ENCODE measurements at regions of chr6 and their contacts with region 1.

Region 1: GRCh38 chr6:20401205-20402091 is at the start of gene E2F3:
- DNase-seq: peak; percentile 100
- H3K4me3 ChIP-seq: peak within 1 kb of the TSS; percentile 87
- H3K27ac ChIP-seq: peak within 1 kb of the TSS; percentile 65
- H3K27me3 ChIP-seq: no peaks in the 10 kb centered on the region
- CTCF ChIP-seq: no peak
- polyA plus RNA-seq, gene E2F3: 10.4 and 10.7 TPM in 2 replicates

Region 2: GRCh38 chr6:18595774-18596530 is 1805.5 kb before region 1 on chr6:
- CTCF ChIA-PET with region 1: interaction called, 10 read pairs
- POLR2A ChIA-PET with region 1: no interaction called
- DNase-seq: peak; percentile 36
- H3K4me3 ChIP-seq: no peak overlapping the region
- H3K27ac ChIP-seq: no peak overlapping the region
- H3K27me3 ChIP-seq: no peaks in the 10 kb centered on the region
- CTCF ChIP-seq: peak; percentile 99

Region 3: GRCh38 chr6:20377623-20378265 is 23.7 kb before region 1 on chr6:
- CTCF ChIA-PET with region 1: interaction called, 20 read pairs
- POLR2A ChIA-PET with region 1: interaction called, 8 read pairs
- DNase-seq: peak; percentile 53
- H3K4me3 ChIP-seq: no peak overlapping the region
- H3K27ac ChIP-seq: no peak overlapping the region
- H3K27me3 ChIP-seq: no peaks in the 10 kb centered on the region
- CTCF ChIP-seq: no peak

Region 4: GRCh38 chr6:20417819-20418218 is 16.4 kb after region 1 on chr6:
- CTCF ChIA-PET with region 1: interaction called, 20 read pairs
- POLR2A ChIA-PET with region 1: interaction called, 3 read pairs
- DNase-seq: no peak
- H3K4me3 ChIP-seq: no peak overlapping the region
- H3K27ac ChIP-seq: no peak overlapping the region
- H3K27me3 ChIP-seq: no peaks in the 10 kb centered on the region
- CTCF ChIP-seq: no peak

Region 5: GRCh38 chr6:20534295-20535262 is 133.1 kb after region 1 on chr6 and contains the start of gene CDKAL1:
- CTCF ChIA-PET with region 1: interaction called, 18 read pairs
- POLR2A ChIA-PET with region 1: no interaction called
- DNase-seq: peak; percentile 83
- H3K4me3 ChIP-seq: peak within 1 kb of the TSS; percentile 96
- H3K27ac ChIP-seq: peak within 1 kb of the TSS; percentile 85
- H3K27me3 ChIP-seq: no peaks in the 10 kb centered on the region
- CTCF ChIP-seq: no peak
- polyA plus RNA-seq, gene CDKAL1: 6.8 and 9.2 TPM in 2 replicates

Region 6: GRCh38 chr6:20559924-20560551 is 158.6 kb after region 1 on chr6:
- CTCF ChIA-PET with region 1: no interaction called
- POLR2A ChIA-PET with region 1: no interaction called
- DNase-seq: no peak
- H3K4me3 ChIP-seq: no peak overlapping the region
- H3K27ac ChIP-seq: no peak overlapping the region
- H3K27me3 ChIP-seq: no peaks in the 10 kb centered on the region
- CTCF ChIP-seq: no peak

Measured in AG04450 (cell line).